Naive thymus-derived CD4-positive, alpha-beta T cell (primary cell): ENCODE measurements at regions of chr11 and their contacts with region 1.

Region 1: DNA sequence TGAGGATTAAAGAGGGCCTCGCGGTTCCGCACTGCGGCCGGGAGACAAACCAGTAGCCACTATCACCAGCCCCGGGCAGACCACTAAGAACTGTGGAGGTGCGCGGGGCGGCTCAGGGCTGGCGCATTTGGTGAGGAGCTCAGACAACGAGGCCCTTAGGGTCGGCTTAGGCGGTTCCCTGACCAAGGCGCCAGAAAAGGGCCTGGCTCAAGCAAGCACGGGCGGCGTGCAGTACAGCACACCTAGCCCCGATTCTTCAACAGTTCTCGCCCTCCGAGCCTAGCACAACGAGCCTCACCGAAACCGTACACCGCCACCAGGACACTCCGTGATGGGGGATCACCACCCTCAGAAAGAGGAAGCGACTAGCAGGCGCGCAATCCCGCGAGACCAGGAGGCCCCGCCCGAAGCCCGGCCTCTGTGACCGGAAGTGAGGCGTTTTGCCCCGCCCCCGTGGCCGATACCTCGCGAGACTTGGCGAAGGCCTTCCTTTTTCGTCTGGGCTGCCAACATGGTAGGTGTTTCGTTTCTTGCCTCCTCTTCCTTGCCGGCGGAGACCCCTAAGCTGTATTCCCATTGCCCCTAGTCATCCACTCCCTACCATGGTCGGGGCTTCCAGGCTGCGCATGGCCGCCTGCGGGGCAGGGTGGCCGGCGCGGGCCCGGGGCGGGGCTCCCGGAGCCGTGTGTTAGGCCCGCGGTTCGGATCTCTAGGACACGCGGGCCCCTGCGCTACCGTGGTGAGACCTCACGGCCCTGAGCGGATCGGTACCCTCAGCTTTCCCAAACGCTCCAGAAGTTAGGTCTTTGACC is at the starts of genes RPL27A and TRIM66:
- DNase-seq: peak; percentile 97 to 100 (median 99)
- ATAC-seq: peak; percentile 98
- H3K4me3 ChIP-seq: peak within 1 kb of the TSS; percentile 73
- H3K4me3 Mint-ChIP-seq: peak within 1 kb of the TSS; percentile 89 to 97 (median 96)
- H3K27ac ChIP-seq: peak within 1 kb of the TSS; percentile 99
- H3K27ac Mint-ChIP-seq: peak within 1 kb of the TSS; percentile 97 to 99 (median 98)
- H3K4me1 ChIP-seq: peaks cover 17% of the 10 kb centered on the region in 2 donors
- H3K4me1 Mint-ChIP-seq: peaks cover 30 to 57% (median 43%) of the 10 kb centered on the region in 7 donors
- H3K27me3 ChIP-seq: no peaks in the 10 kb centered on the region
- H3K27me3 Mint-ChIP-seq: no peaks in the 10 kb centered on the region
- total RNA-seq, gene RPL27A: 758 to 2,116 (median 1,670) TPM
- total RNA-seq, gene TRIM66: 16.0 to 37.6 (median 24.2) TPM

Region 2: DNA sequence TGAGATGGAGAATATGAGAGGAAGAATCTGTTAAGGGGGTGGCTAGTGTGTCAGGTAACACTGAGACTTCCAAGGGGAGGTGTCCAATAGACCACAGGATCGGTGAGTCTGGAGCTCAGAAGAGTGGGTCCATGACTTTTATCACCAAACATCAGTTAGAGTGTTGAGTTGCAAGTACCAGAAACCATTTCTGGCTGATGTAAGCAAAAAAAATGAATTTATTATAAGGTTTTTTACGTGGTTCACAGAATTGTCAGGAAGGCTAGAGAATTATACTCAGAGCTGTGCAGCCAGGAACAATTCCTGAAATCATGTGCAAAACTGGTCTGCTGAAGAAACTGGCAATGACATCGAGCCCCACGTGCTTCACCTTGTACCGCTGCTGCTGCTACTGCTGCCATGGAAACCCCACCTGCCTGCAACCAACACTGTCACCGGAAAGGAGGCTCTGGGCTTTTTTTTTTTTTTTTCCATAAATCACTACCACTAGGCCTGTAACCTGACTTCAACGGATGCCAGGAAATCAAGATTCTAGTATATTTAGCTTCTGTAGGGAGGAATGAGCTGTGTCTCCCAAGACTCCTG is 71.9 kb before region 1 on chr11:
- CTCF ChIA-PET with region 1: no interaction called
- POLR2A ChIA-PET with region 1: no interaction called
- intact Hi-C with region 1: loop called in 1 of 2 experiments (anchors 2 kb)
- DNase-seq: peak in 8 of 9 donors; percentile 11 to 56 (median 32)
- ATAC-seq: peak; percentile 72
- H3K4me3 ChIP-seq: no peak overlapping the region
- H3K4me3 Mint-ChIP-seq: peak overlapping the region in 1 of 10 donors; percentile 27
- H3K27ac ChIP-seq: no peak overlapping the region
- H3K27ac Mint-ChIP-seq: peak overlapping the region in 7 of 9 donors; percentile 26 to 87 (median 72)
- H3K4me1 ChIP-seq: peaks cover 0 to 3% of the 10 kb centered on the region in 2 donors
- H3K4me1 Mint-ChIP-seq: peaks cover 0 to 12% (median 11%) of the 10 kb centered on the region in 7 donors
- H3K27me3 ChIP-seq: no peaks in the 10 kb centered on the region
- H3K27me3 Mint-ChIP-seq: peaks cover 0 to 8% (median 0%) of the 10 kb centered on the region in 5 donors